ENCODE measurements at regions of chr14 and their contacts with region 1.

Region 1: DNA sequence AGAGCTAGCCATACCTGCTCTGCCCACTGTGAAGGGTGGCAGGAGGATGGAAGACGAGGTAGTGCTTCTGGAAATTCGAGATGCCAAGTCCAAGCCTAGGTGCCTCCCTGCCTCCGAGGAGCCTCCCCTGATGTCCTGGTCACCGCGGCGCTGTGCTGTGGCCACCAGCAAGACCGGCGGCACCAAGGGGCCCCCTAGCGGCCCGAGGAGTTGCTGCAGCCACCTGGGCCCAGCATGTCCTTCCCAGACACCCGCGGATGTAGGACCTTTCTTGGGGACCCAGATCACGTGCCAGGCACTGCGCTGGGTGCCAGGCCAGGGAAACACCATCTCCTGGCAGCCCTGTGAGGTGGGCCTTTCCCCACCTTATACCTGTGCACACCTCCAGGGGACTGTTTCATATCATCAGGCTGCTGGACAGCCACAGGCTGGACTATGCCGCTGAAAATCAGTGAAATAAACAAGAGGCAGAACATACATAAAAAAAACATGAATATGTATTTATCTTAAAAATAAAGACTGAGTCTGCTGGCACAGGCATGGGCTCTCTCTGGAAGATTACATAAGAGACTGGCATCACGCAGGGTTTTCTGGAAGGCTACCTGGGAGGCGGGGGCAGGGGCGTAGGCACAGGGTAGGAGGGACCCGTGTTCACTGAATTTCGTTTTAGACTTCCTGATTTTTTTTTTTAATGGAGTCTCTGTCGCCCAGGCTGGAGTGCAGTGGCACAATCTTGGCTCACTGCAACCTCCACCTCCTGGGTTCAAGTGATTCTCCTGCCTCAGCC is 15.9 kb upstream of the HHIPL1 start:
- DNase-seq: peak; percentile 49 to 60
- ATAC-seq: peak; percentile 89 to 91
- H3K4me3 ChIP-seq: no peak overlapping the region
- H3K27ac ChIP-seq: no peak overlapping the region
- H3K4me1 ChIP-seq: no peaks in the 10 kb centered on the region
- H3K27me3 ChIP-seq: no peaks in the 10 kb centered on the region
- CTCF ChIP-seq: peak; percentile 89 to 98 (median 96)
- POLR2A ChIP-seq: no peak

Region 2: DNA sequence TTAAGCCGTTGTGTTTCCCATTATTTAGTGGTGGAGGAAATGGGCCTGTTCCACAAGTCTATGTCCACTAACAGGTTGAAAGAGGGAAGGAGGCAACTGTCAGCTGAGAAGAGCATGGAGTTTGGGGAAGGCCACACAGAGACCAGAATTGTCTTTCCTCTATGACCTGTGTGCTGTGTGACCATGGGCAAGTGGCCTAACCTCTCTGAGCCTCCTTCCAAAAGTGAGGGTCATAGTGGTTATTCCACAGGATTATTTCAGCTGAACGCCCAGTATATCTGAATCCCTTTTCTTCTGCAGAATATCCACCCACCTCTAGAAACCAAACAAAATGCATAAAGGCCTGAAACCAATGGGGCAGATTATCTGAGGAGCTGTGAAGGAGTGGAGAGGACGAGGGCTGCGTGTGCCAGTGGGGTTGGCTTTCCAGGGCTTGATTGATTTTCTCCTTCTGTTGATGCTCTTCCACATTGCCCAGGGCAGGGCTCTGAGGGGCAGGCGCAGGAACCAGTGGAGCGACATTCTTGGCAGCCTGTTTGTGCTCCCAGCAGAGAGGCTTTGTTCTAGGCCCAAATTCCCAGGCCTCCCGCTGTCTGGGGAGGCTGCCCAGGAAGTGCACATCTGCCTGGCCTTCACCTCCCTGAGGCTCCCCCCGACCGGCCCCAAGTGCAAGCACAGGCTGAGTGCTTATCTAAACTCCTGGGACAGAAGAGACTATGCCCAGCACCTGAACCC is 809.7 kb before region 1 on chr14:
- in situ Hi-C with region 1: no loop called
- intact Hi-C with region 1: no loop called
- DNase-seq: no peak
- ATAC-seq: no peak
- H3K4me3 ChIP-seq: no peak overlapping the region
- H3K27ac ChIP-seq: no peak overlapping the region
- H3K4me1 ChIP-seq: no peaks in the 10 kb centered on the region
- H3K27me3 ChIP-seq: no peaks in the 10 kb centered on the region
- CTCF ChIP-seq: no peak
- POLR2A ChIP-seq: no peak

Region 3: GRCh38 chr14:99518441-99519346 is 110.3 kb before region 1 on chr14:
- in situ Hi-C with region 1: loop called (anchors 5 to 10 kb)
- intact Hi-C with region 1: loop called (anchors 1 kb)
- DNase-seq: peak; percentile 27 to 60
- ATAC-seq: peak; percentile 66 to 68
- H3K4me3 ChIP-seq: no peak overlapping the region
- H3K27ac ChIP-seq: no peak overlapping the region
- H3K4me1 ChIP-seq: no peaks in the 10 kb centered on the region
- H3K27me3 ChIP-seq: no peaks in the 10 kb centered on the region
- CTCF ChIP-seq: peak; percentile 90 to 99 (median 95)
- POLR2A ChIP-seq: no peak

Region 4: GRCh38 chr14:99524804-99525698 is 104.0 kb before region 1 on chr14:
- in situ Hi-C with region 1: loop called (anchors 5 to 10 kb)
- intact Hi-C with region 1: no loop called
- DNase-seq: no peak
- ATAC-seq: peak in 1 of 2 donors; percentile 28
- H3K4me3 ChIP-seq: no peak overlapping the region
- H3K27ac ChIP-seq: peak overlapping the region in 2 of 4 donors; percentile 4 to 46
- H3K4me1 ChIP-seq: no peaks in the 10 kb centered on the region
- H3K27me3 ChIP-seq: no peaks in the 10 kb centered on the region
- CTCF ChIP-seq: no peak
- POLR2A ChIP-seq: no peak

Region 5: DNA sequence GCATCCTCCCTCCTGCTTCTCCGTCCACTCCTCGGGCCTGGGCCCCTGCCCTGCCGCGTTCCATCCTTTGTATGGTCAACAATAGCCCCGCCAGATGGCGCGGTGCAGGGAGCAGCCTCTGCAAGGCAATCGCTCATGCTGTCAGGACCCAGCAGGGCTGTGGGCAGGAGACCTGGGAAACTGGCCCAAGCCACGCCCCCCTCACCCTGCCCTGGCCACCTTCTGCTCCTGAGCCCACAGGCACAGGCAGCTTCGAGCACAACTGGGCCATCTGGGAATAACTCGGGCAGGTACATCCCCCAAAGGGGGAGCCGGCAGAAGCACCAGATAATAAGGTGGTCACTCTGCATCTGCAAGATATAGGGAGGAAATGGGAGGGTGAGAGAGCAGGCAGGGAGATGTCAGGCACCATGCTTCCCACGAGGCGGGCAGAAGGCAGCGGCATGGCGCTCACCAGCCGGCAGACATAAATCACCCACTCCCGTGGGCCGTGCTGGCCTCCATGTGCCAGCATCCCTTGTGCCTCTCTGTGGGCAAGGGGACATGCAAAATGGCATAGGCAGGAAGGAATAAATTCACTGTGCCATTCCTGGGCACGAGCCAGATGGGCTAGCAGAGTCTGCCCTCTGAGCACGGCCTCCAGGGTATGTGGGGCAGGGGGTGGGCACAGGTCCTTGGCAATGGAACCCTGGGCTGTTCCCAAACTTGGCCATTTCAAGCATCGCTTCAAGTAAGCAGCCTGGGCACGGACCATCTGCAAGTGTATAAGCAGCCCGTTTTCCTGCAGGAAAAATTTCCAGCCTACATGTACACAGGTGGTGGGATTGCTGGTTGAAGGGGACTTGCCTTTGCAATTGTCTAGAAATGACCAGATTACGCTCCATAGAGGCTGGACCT is 65.5 kb before region 1 on chr14:
- in situ Hi-C with region 1: no loop called
- intact Hi-C with region 1: loop called (anchors 1 kb)
- DNase-seq: peak; percentile 43 to 66
- ATAC-seq: peak; percentile 67 to 73
- H3K4me3 ChIP-seq: no peak overlapping the region
- H3K27ac ChIP-seq: no peak overlapping the region
- H3K4me1 ChIP-seq: peaks cover 21 to 35% of the 10 kb centered on the region in 2 donors
- H3K27me3 ChIP-seq: no peaks in the 10 kb centered on the region
- CTCF ChIP-seq: peak in 3 of 5 experiments; percentile 46 to 57 (median 48)
- POLR2A ChIP-seq: no peak

Region 6: DNA sequence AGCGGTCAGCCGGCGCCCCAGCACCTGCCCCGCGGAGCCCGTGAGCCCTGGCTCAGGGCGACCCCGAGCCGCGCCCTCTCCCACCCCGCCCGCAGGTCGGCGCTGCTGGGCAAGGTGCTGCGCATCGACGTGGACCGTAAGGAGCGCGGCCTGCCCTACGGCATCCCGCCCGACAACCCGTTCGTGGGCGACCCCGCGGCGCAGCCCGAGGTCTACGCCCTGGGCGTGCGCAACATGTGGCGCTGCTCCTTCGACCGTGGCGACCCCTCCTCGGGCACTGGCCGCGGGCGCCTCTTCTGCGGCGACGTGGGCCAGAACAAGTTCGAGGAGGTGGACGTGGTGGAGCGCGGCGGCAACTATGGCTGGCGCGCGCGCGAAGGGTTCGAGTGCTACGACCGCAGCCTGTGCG is 30.3 kb after region 1 on chr14:
- in situ Hi-C with region 1: no loop called
- intact Hi-C with region 1: no loop called
- DNase-seq: no peak
- ATAC-seq: no peak
- H3K4me3 ChIP-seq: no peak overlapping the region
- H3K27ac ChIP-seq: no peak overlapping the region
- H3K4me1 ChIP-seq: no peaks in the 10 kb centered on the region
- H3K27me3 ChIP-seq: peaks cover 24 to 43% (median 30%) of the 10 kb centered on the region in 3 donors
- CTCF ChIP-seq: no peak
- POLR2A ChIP-seq: no peak

Region 7: DNA sequence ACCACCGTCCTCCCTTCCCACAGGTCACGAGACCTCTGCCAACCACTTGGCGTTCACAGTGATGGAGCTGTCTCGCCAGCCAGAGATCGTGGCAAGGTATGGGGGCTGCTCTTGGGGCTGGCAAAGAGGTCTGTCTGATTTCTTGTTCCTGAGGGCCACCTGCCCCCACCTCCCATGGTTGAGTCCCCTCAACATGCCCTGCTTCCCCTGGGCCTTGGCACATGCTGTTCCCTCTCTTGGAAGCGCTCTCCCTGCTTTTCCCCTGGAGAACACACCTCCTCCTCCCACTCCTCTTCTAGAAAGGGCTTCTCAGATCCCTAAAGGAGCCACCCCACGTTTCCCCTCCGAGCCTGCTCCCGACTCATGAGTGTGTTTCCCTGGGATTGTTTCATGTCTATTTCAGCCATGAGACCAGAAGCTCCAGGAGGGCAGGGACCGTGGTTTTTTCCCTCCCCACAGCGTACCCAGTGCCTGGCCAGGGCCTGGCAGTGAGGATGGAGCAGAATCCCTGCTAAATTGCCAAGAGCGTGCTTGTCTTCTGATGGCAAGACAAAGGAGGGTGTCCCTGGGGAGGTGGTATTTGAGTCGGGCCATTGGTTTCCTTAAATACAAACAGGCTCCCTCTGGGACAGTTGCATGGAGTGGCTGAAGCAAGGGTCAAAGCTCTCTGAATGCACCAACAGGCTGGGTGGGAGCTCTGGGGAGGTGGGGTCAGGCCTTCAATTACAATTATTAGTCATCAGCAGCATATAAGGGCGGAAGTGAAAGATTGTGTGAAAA is 89.2 kb after region 1 on chr14:
- in situ Hi-C with region 1: no loop called
- intact Hi-C with region 1: no loop called
- DNase-seq: no peak
- ATAC-seq: no peak
- H3K4me3 ChIP-seq: no peak overlapping the region
- H3K27ac ChIP-seq: no peak overlapping the region
- H3K4me1 ChIP-seq: no peaks in the 10 kb centered on the region
- H3K27me3 ChIP-seq: no peaks in the 10 kb centered on the region
- CTCF ChIP-seq: no peak
- POLR2A ChIP-seq: no peak

Measured in gastrocnemius medialis (tissue), 4 donors.